K562 (cell line): ENCODE measurements at regions of chr6 and their contacts with region 1.

Region 1: GRCh38 chr6:128520436-128521281 is at the start of gene PTPRK:
- DNase-seq: peak; percentile 22 to 49 (median 28)
- ATAC-seq: peak; percentile 97
- H3K4me3 ChIP-seq: peak within 1 kb of the TSS; percentile 19; the same call in 1 of the 2 replicates
- H3K27ac ChIP-seq: no peak within 1 kb of the TSS
- H3K4me1 ChIP-seq: peaks cover 0 to 6% of the 10 kb centered on the region in 2 experiments; a peak in 2 of 5 replicates
- H3K27me3 ChIP-seq: no peaks in the 10 kb centered on the region
- CTCF ChIP-seq: no peak
- EP300 ChIP-seq: no peak
- POLR2A ChIP-seq: no peak
- RAD21 ChIP-seq: no peak
- polyA plus RNA-seq, gene PTPRK: not detected

Region 2: DNA sequence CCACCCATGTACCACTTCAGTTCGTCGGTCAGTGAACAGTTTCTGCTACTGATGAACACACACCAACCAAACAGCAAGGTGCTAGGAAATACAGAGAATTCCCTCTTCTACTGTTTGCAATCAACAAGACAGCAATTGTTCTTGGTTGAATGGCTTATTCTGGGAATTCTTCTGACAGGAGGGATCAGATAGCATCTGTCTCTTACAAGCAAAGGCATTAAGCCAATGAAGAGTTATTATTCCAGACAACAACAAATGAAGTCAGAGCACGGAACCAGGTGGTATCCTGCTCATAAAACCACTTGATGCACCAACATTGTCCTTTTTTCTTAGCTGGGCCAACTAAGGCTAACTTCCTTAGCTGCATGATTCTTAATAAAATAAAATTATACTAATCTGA is 38.0 kb before region 1 on chr6:
- CTCF ChIA-PET with region 1: no interaction called
- POLR2A ChIA-PET with region 1: no interaction called
- in situ Hi-C with region 1: no loop called
- intact Hi-C with region 1: loop called (anchors 1 kb)
- DNase-seq: no peak
- ATAC-seq: no peak
- H3K4me3 ChIP-seq: no peak overlapping the region
- H3K27ac ChIP-seq: no peak overlapping the region
- H3K4me1 ChIP-seq: no peaks in the 10 kb centered on the region
- H3K27me3 ChIP-seq: no peaks in the 10 kb centered on the region
- CTCF ChIP-seq: no peak
- EP300 ChIP-seq: no peak
- POLR2A ChIP-seq: no peak
- RAD21 ChIP-seq: no peak

Region 3: DNA sequence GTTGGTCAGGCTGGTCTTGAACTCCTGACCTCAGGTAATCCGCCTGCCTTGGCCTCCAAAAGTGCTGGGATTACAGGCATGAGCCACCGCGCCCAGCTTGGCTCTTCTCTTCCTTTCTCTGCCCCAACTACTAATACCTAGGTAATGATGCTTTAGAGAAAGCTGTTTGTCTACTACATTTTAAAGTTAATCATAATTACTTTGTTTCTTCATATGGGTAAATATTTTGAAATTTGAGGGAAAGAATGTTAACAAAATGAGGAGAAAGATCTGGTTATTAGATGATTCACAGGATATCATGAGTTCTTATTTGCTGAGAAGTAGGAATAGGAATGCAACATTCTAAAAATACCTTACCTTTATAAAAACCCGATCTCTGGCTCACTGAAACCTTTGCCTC is 18.1 kb after region 1 on chr6:
- CTCF ChIA-PET with region 1: no interaction called
- POLR2A ChIA-PET with region 1: no interaction called
- in situ Hi-C with region 1: no loop called
- intact Hi-C with region 1: no loop called
- DNase-seq: no peak
- ATAC-seq: no peak
- H3K4me3 ChIP-seq: no peak overlapping the region
- H3K27ac ChIP-seq: no peak overlapping the region
- H3K4me1 ChIP-seq: no peaks in the 10 kb centered on the region
- H3K27me3 ChIP-seq: no peaks in the 10 kb centered on the region
- CTCF ChIP-seq: no peak
- EP300 ChIP-seq: no peak
- POLR2A ChIP-seq: no peak
- RAD21 ChIP-seq: no peak